Dorsolateral prefrontal cortex (tissue), 120 donors: ENCODE measurements at regions of chr13 and their contacts with region 1.

Region 1: GRCh38 chr13:94710881-94711560 is 1.3 kb downstream of the SOX21 start:
- DNase-seq: peak in 1 of 10 donors; percentile 45
- H3K4me3 ChIP-seq: peak overlapping the region; percentile 20 to 72 (median 56)
- H3K27ac ChIP-seq: peak overlapping the region in 51 of 59 donors; percentile 10 to 93 (median 69)
- H3K27me3 ChIP-seq: peaks cover 13 to 85% (median 74%) of the 10 kb centered on the region in 45 donors
- CTCF ChIP-seq: peak in 13 of 56 donors; percentile 14 to 50 (median 25)

Region 2: DNA sequence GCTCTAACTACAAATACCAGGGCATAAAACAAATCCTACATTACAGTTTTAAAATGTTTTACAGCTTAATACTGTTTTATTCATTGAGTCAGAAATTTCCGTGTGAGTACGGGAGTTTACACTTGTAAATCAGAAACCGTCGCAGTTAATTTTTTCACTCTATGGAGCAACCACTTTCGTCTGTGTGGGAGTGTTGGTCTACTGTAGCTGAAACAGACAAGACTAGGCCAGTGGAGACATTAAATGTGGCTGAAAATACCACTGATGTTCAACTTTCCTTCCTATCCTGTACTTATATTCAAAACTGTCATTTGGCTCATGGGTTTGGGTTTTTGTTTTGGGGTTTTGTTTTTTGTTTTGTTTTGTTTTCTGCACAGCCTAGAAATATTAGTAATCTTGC is 500.2 kb before region 1 on chr13:
- intact Hi-C with region 1: no loop called
- DNase-seq: no peak
- H3K4me3 ChIP-seq: no peak overlapping the region
- H3K27ac ChIP-seq: no peak overlapping the region
- H3K27me3 ChIP-seq: no peaks in the 10 kb centered on the region
- CTCF ChIP-seq: no peak

Region 3: GRCh38 chr13:94667190-94667589 is 43.8 kb before region 1 on chr13:
- intact Hi-C with region 1: loop called in 1 of 2 experiments (anchors 5 kb)
- DNase-seq: no peak
- H3K4me3 ChIP-seq: no peak overlapping the region
- H3K27ac ChIP-seq: no peak overlapping the region
- H3K27me3 ChIP-seq: peaks cover 0 to 27% (median 8%) of the 10 kb centered on the region in 45 donors
- CTCF ChIP-seq: no peak

Region 4: DNA sequence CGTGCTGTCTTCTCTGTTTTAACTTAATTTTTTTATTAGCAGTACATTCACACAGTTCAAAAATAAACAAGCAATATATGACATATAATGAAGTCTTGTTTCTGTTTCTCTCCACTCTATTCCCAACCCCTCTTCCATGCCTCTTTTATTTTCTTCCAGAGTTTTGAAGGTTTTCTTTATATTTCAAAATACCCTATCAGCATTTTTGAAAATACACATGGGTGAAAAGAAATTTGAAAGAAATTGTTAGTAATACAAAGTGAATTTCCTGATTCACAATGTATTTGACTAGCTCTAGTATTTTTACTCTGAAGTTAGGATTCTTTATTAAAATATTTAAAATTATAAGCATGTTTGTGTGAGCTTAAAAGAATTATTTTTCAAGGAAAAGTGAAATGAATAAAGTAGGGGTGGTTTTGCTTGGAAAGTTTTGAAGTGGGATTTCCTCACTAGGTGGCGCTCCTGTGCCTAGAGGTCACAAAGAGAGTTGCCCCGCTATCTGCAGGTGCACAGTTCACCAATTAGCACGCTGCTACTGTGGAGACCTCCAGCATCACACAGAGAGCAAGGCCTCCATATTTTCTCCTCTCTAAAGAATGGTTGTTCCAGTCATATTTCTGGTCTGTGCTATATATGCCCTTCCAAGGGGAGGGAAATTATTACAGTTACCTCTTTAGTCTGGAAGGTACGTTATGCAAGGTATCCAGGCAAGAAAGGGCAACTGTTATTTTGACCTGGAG is 36.2 kb before region 1 on chr13:
- intact Hi-C with region 1: loop called in 1 of 2 experiments (anchors 2 kb)
- DNase-seq: peak in 4 of 10 donors; percentile 13 to 42 (median 32)
- H3K4me3 ChIP-seq: no peak overlapping the region
- H3K27ac ChIP-seq: no peak overlapping the region
- H3K27me3 ChIP-seq: peaks cover 0 to 11% (median 0%) of the 10 kb centered on the region in 45 donors
- CTCF ChIP-seq: peak in 55 of 56 donors; percentile 32 to 85 (median 67)

Region 5: GRCh38 chr13:94813920-94814500 is 103.0 kb after region 1 on chr13:
- intact Hi-C with region 1: no loop called
- DNase-seq: no peak
- H3K4me3 ChIP-seq: no peak overlapping the region
- H3K27ac ChIP-seq: no peak overlapping the region
- H3K27me3 ChIP-seq: no peaks in the 10 kb centered on the region
- CTCF ChIP-seq: no peak

Region 6: GRCh38 chr13:94950303-94950702 is 239.3 kb after region 1 on chr13:
- intact Hi-C with region 1: loop called in 1 of 2 experiments (anchors 5 kb)
- DNase-seq: peak in 1 of 10 donors; percentile 17
- H3K4me3 ChIP-seq: peak overlapping the region in 1 of 59 donors; percentile 5
- H3K27ac ChIP-seq: no peak overlapping the region
- H3K27me3 ChIP-seq: peaks cover 0 to 14% (median 0%) of the 10 kb centered on the region in 45 donors
- CTCF ChIP-seq: peak in 42 of 56 donors; percentile 12 to 59 (median 34)

Region 7: GRCh38 chr13:94967183-94968039 is 256.4 kb after region 1 on chr13:
- intact Hi-C with region 1: loop called (anchors 2 to 5 kb)
- DNase-seq: peak in 2 of 10 donors; percentile 42 to 58
- H3K4me3 ChIP-seq: peak overlapping the region; percentile 22 to 71 (median 54)
- H3K27ac ChIP-seq: peak overlapping the region in 57 of 59 donors; percentile 5 to 90 (median 76)
- H3K27me3 ChIP-seq: peaks cover 0 to 86% (median 57%) of the 10 kb centered on the region in 45 donors
- CTCF ChIP-seq: no peak